H1 (cell line): ENCODE measurements at regions of chr15 and their contacts with region 1.

Region 1: GRCh38 chr15:72532991-72533601 is 59.0 kb downstream of the ARIH1 start:
- DNase-seq: no peak
- H3K4me3 ChIP-seq: no peak overlapping the region
- H3K27ac ChIP-seq: no peak overlapping the region
- H3K4me1 ChIP-seq: no peaks in the 10 kb centered on the region
- H3K27me3 ChIP-seq: no peaks in the 10 kb centered on the region
- CTCF ChIP-seq: peak; percentile 47 to 59 (median 55)
- EP300 ChIP-seq: no peak
- POLR2A ChIP-seq: no peak
- RAD21 ChIP-seq: peak; percentile 56 to 61

Region 2: DNA sequence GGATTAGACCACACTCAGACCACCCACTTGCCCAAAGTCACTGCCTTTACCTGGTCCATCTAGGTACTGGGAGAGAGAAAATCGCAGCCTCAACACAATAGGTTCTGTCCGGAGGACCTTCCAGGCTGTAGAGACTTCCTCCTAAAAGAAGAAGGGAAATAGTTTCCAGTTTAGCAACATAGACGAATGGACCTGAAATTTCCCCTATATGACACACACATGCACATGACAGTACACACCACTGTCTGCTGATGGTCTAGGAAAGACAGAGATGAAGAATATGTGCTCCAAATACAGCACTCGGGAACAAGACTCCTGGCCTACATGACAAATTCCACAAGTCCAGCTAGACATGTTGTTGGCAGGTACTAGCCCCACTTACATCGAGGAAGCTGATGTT is 268.1 kb before region 1 on chr15:
- CTCF ChIA-PET with region 1: no interaction called
- POLR2A ChIA-PET with region 1: no interaction called
- DNase-seq: no peak
- H3K4me3 ChIP-seq: no peak overlapping the region
- H3K27ac ChIP-seq: no peak overlapping the region
- H3K4me1 ChIP-seq: no peaks in the 10 kb centered on the region
- H3K27me3 ChIP-seq: peaks cover 0 to 3% (median 0%) of the 10 kb centered on the region in 4 experiments; a peak in 1 of 7 replicates
- CTCF ChIP-seq: no peak
- EP300 ChIP-seq: no peak
- POLR2A ChIP-seq: no peak
- RAD21 ChIP-seq: no peak

Region 3: DNA sequence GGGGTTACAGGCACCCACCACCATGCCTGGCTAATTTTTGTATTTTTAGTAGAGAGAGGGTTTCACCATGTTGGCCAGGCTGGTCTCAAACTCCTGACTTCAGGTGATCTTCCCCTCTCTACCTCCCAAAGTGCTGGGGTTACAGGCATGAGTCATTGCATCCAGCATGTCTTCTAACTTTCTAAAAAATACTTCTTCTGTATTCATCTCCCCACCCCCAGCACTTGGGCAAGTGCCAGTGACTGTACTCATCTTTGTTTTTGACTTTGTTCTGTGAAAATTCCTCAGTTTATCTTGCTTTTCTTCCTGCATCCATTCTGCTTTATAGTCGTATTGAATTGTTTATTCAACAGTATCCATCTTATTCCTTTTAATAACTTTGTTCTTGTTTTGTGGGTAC is 11.4 kb before region 1 on chr15:
- CTCF ChIA-PET with region 1: interaction called, 15 read pairs
- POLR2A ChIA-PET with region 1: no interaction called
- DNase-seq: no peak
- H3K4me3 ChIP-seq: no peak overlapping the region
- H3K27ac ChIP-seq: no peak overlapping the region
- H3K4me1 ChIP-seq: no peaks in the 10 kb centered on the region
- H3K27me3 ChIP-seq: no peaks in the 10 kb centered on the region
- CTCF ChIP-seq: no peak
- EP300 ChIP-seq: no peak
- POLR2A ChIP-seq: no peak
- RAD21 ChIP-seq: no peak

Region 4: GRCh38 chr15:72545156-72545555 is 12.1 kb after region 1 on chr15:
- CTCF ChIA-PET with region 1: interaction called, 16 read pairs
- POLR2A ChIA-PET with region 1: no interaction called
- DNase-seq: no peak
- H3K4me3 ChIP-seq: no peak overlapping the region
- H3K27ac ChIP-seq: no peak overlapping the region
- H3K4me1 ChIP-seq: no peaks in the 10 kb centered on the region
- H3K27me3 ChIP-seq: no peaks in the 10 kb centered on the region
- CTCF ChIP-seq: no peak
- EP300 ChIP-seq: no peak
- POLR2A ChIP-seq: no peak
- RAD21 ChIP-seq: no peak